Posterior vena cava (tissue), 2 donors: ENCODE measurements at regions of chr13 and their contacts with region 1.

Region 1: GRCh38 chr13:39602614-39603366 is at the start of gene LHFPL6:
- DNase-seq: peak; percentile 96
- total RNA-seq, gene LHFPL6: 206 to 213 TPM

Region 2: DNA sequence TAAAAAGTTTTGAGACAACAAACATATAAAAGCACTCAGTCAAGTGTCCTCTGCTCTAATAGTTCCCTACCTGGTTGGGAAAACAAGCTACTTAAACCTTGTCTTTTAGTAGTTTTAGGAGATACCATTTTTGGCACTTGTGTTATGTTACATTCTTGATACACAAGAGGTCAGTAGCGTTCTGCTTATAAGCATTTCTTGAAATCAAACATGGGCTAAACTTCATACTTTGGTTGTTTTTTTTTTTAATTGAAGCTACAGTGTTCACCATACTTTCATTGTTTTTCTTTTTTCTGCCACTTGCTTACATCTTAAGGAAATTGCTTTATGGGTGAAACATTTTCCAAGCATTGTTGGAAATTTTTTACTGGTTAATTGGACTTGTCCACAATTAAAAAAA is 551.6 kb before region 1 on chr13:
- intact Hi-C with region 1: loop called in 1 of 2 experiments (anchors 10 kb)
- DNase-seq: no peak

Region 3: GRCh38 chr13:39144941-39145533 is 457.8 kb before region 1 on chr13:
- intact Hi-C with region 1: loop called in 1 of 2 experiments (anchors 10 kb)
- DNase-seq: no peak

Region 4: DNA sequence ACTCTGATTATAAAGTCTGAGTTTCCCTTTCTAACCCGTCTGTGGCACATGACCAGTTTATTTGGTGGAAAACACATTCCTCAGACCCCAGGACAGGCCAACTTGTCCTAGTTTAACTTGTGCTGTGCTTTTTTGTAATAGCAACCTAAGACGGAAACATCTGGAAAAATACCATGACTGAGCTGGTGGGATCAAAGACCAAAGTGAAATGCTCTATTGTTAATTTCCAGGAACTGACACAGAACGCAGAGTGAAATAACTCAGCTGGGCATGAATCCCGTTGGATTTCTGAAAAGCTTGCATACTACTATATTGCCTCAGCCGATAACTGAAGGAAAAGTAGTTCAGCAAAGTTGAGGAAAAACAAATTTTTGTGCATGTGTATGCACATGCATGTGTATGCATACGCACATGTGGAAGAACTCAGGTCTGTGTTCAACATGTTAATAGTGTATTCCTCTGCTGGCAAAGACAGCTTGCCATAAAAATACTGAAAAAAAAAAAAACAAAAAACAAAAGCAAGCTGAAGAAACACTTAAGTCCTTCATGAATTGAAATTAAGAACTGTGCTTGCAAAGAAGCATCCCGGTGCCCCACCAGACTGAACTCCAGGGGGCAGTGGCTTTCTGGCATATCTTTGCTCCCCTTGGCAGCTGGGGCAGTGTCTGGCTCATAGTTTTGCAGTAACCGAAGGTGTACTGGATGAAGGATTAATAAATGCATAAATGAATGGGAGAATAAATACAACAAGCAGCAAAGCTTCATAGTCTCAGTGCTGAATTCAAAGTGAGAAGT is 187.6 kb before region 1 on chr13:
- intact Hi-C with region 1: loop called (anchors 5 to 10 kb)
- DNase-seq: no peak

Region 5: GRCh38 chr13:40749327-40749726 is 1146.5 kb after region 1 on chr13:
- intact Hi-C with region 1: no loop called
- DNase-seq: no peak